Breast epithelium (tissue), 4 donors: ENCODE measurements at regions of chr16 and their contacts with region 1.

Region 1: GRCh38 chr16:1054660-1055556 is 17.6 kb upstream of the SSTR5 start:
- DNase-seq: no peak
- H3K4me3 ChIP-seq: no peak overlapping the region
- H3K27ac ChIP-seq: no peak overlapping the region
- H3K4me1 ChIP-seq: no peaks in the 10 kb centered on the region
- H3K27me3 ChIP-seq: peaks cover 7 to 52% of the 10 kb centered on the region in 2 donors
- CTCF ChIP-seq: peak; percentile 16 to 79 (median 63)
- POLR2A ChIP-seq: no peak

Region 2: GRCh38 chr16:813204-813915 is 241.5 kb before region 1 on chr16:
- intact Hi-C with region 1: loop called (anchors 5 kb)
- DNase-seq: no peak
- H3K4me3 ChIP-seq: peak overlapping the region in 2 of 3 donors; percentile 39 to 58
- H3K27ac ChIP-seq: no peak overlapping the region
- H3K4me1 ChIP-seq: no peaks in the 10 kb centered on the region
- H3K27me3 ChIP-seq: peaks cover 0 to 52% of the 10 kb centered on the region in 2 donors
- CTCF ChIP-seq: peak in 1 of 3 donors; percentile 58
- POLR2A ChIP-seq: no peak